ENCODE measurements at regions of chr22 and their contacts with region 1.

Region 1: DNA sequence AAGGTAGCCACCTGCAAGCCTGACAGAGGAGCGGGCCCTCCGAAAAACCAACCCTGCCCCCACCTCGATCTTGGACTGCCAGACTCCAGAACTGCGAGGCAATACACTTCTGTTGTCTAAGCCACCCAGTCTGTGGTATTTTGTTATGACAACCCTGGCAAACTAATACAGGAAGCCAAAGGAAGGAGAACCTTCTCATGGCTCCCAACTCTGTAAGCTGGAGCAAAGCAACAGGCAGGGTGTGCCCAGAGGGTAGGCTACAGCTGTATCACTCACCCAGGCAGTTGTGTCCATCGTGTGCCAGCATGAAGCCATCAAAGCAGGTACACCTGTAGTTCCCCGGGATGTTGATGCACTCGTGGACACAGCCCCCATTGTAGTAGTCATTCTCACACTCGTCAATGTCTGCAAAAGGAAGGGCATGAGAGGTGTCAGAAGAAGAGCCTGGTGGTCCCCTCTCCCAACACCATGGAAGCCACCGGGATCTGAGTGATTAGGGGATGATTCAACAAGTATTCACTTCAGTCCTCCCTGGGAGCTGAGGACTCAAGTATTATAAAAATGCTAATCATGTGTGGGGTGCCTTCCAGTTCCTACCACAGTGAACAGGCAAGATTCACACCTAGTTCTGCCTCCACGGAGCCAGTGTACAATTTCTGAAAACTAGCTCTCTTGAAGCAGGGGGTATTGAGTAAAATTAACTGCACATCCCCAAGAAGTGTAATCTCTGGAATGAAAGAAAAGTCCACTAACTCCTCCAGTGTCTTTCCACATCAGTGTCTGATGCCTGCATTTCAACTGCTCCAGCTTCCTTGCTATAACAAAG is 23.3 kb downstream of the SCUBE1 start:
- DNase-seq: no peak
- H3K4me3 ChIP-seq: no peak overlapping the region
- H3K4me3 Mint-ChIP-seq: no peak overlapping the region
- H3K27ac Mint-ChIP-seq: no peak overlapping the region
- H3K4me1 ChIP-seq: peaks cover 14% of the 10 kb centered on the region
- H3K4me1 Mint-ChIP-seq: no peaks in the 10 kb centered on the region
- H3K27me3 ChIP-seq: no peaks in the 10 kb centered on the region; the same call in 1 of the 2 replicates
- H3K27me3 Mint-ChIP-seq: no peaks in the 10 kb centered on the region
- CTCF ChIP-seq: no peak

Region 2: GRCh38 chr22:43370036-43370435 is 50.2 kb after region 1 on chr22:
- CTCF ChIA-PET with region 1: no interaction called
- POLR2A ChIA-PET with region 1: no interaction called
- intact Hi-C with region 1: no loop called
- DNase-seq: no peak
- H3K4me3 ChIP-seq: no peak overlapping the region
- H3K4me3 Mint-ChIP-seq: no peak overlapping the region
- H3K27ac Mint-ChIP-seq: no peak overlapping the region
- H3K4me1 ChIP-seq: no peaks in the 10 kb centered on the region
- H3K4me1 Mint-ChIP-seq: no peaks in the 10 kb centered on the region
- H3K27me3 ChIP-seq: no peaks in the 10 kb centered on the region; the same call in 1 of the 2 replicates
- H3K27me3 Mint-ChIP-seq: peaks cover 23% of the 10 kb centered on the region
- CTCF ChIP-seq: no peak

Region 3: GRCh38 chr22:43408009-43408408 is 88.1 kb after region 1 on chr22:
- CTCF ChIA-PET with region 1: no interaction called
- POLR2A ChIA-PET with region 1: interaction called, 12 read pairs
- intact Hi-C with region 1: no loop called
- DNase-seq: no peak
- H3K4me3 ChIP-seq: no peak overlapping the region
- H3K4me3 Mint-ChIP-seq: no peak overlapping the region
- H3K27ac Mint-ChIP-seq: no peak overlapping the region
- H3K4me1 ChIP-seq: no peaks in the 10 kb centered on the region
- H3K4me1 Mint-ChIP-seq: no peaks in the 10 kb centered on the region
- H3K27me3 ChIP-seq: no peaks in the 10 kb centered on the region
- H3K27me3 Mint-ChIP-seq: peaks cover 12% of the 10 kb centered on the region
- CTCF ChIP-seq: no peak